Activated CD4-positive, alpha-beta T cell treated with anti-CD3 and anti-CD28 coated beads, Interleukin-2, amount 10 ng/mL, durations not matched to agents 24 days and 14 days (primary cell): ENCODE measurements at regions of chr7 and their contacts with region 1.

Region 1: DNA sequence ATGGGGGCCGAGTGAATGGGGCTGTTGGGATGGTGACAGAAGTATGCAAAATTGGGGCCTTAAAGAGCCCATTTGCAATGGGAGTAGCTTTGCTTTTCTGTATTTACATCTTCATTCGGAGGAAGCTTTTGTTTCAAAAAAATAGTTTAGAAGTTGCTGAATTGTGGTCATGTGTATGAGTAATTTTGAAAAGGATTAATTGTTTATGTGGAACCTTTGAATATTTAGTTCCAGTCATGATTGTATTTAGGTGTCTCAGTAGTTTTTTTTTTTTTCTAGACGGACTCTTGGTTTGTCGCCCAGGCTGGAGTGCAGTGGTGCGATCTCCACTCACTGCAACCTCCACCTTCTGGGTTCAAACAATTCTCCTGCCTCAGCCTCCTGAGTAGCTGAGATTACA is 37.2 kb downstream of the RBM33 start:
- DNase-seq: no peak
- H3K4me3 Mint-ChIP-seq: no peak overlapping the region
- H3K27ac Mint-ChIP-seq: peak overlapping the region; percentile 37
- H3K4me1 Mint-ChIP-seq: peaks cover 39% of the 10 kb centered on the region
- H3K27me3 Mint-ChIP-seq: no peaks in the 10 kb centered on the region

Region 2: DNA sequence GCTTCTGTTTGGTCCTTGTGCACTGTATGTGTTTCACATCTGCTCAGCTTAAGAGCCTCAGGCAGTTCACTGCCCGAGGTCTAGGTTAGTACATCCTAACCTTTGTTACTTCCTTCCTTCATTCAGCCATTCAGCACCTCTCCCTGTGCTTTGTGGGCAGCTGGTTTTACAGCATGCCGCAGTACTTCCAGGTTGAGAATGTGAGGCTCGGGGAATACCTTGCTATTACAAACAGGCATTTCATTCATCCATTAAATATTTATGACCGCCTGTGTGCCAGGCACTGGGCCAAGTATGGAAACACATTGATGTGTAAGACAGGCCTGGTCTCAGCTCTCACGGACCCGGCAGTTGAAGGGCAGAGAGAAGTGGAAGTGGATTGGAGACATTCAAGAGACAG is 48.2 kb after region 1 on chr7:
- intact Hi-C with region 1: loop called (anchors 5 kb)
- DNase-seq: no peak
- H3K4me3 Mint-ChIP-seq: no peak overlapping the region
- H3K27ac Mint-ChIP-seq: no peak overlapping the region
- H3K4me1 Mint-ChIP-seq: peaks cover 24% of the 10 kb centered on the region
- H3K27me3 Mint-ChIP-seq: no peaks in the 10 kb centered on the region

Region 3: DNA sequence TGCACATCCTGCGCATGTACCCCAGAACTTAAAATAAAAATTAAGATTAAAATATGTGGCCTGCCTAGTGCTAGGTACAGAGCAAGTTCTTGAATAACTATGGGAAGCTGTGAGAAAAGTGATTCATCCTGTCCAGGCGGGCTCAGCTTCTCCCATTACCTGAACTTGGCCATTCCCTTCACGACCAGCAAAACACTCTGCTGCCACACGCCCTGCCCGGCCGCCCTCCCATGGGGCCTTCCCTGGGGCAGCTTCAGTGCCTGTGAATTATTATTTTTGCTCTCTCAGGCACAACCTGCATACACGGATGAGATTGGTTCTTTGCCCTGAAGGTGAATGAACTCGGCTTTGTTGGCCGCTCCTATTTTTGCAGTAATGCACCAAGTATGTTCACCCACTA is 339.8 kb after region 1 on chr7:
- intact Hi-C with region 1: no loop called
- DNase-seq: no peak
- H3K4me3 Mint-ChIP-seq: no peak overlapping the region
- H3K27ac Mint-ChIP-seq: no peak overlapping the region
- H3K4me1 Mint-ChIP-seq: no peaks in the 10 kb centered on the region
- H3K27me3 Mint-ChIP-seq: no peaks in the 10 kb centered on the region